Dendritic cell treated with granulocyte-macrophage colony-stimulating factor and Interleukin-4, amounts not matched to agents 40 ng/mL and 50 ng/mL, for 4 days (primary cell): ENCODE measurements at regions of chr5 and their contacts with region 1.

Region 1: DNA sequence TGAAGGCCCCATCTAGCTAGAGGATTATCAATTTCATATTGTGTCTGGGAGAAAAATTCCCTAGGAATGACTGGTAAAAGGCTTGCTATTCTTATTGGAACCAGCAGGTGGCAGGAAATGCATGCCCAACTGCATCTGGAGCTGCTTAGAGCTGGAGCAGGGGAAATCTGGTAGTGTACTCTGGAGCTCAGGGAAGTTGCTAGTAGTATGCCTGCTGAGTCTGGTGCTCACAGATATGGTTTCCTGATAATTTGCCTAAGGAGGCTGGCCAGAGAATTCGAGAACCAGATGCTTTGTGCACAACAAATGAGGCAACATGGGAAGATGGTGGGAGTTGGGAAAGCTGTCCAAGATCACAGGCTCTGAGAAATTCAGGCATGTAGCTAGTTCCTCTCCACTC is 53.7 kb downstream of the G3BP1 start:
- H3K4me3 Mint-ChIP-seq: no peak overlapping the region
- H3K27ac Mint-ChIP-seq: no peak overlapping the region
- H3K4me1 Mint-ChIP-seq: no peaks in the 10 kb centered on the region
- H3K27me3 Mint-ChIP-seq: no peaks in the 10 kb centered on the region

Region 2: DNA sequence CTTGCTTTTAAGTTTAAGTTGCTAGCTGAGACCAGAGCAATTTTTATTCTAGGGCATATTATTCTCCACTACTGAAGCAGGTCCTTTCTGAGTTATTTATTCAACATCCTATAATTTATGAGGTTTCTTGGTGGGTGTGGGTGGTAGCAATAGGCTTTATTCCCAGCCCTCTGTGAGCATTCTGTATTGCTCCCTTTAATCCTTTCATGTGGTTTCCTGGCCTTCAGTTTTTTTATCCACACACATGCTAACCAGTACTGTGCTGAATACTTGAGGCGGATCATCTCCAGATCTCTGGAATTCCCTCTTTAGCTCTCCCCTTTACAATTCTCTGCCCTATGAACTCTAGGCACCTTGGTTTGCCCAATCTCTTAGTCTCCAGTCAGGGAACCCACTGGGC is 191.0 kb after region 1 on chr5:
- intact Hi-C with region 1: no loop called
- H3K4me3 Mint-ChIP-seq: no peak overlapping the region
- H3K27ac Mint-ChIP-seq: no peak overlapping the region
- H3K4me1 Mint-ChIP-seq: no peaks in the 10 kb centered on the region
- H3K27me3 Mint-ChIP-seq: no peaks in the 10 kb centered on the region

Region 3: GRCh38 chr5:152142840-152143469 is 317.5 kb after region 1 on chr5:
- intact Hi-C with region 1: loop called (anchors 1 kb)
- H3K4me3 Mint-ChIP-seq: no peak overlapping the region
- H3K27ac Mint-ChIP-seq: no peak overlapping the region
- H3K4me1 Mint-ChIP-seq: no peaks in the 10 kb centered on the region
- H3K27me3 Mint-ChIP-seq: peaks cover 3% of the 10 kb centered on the region

Region 4: DNA sequence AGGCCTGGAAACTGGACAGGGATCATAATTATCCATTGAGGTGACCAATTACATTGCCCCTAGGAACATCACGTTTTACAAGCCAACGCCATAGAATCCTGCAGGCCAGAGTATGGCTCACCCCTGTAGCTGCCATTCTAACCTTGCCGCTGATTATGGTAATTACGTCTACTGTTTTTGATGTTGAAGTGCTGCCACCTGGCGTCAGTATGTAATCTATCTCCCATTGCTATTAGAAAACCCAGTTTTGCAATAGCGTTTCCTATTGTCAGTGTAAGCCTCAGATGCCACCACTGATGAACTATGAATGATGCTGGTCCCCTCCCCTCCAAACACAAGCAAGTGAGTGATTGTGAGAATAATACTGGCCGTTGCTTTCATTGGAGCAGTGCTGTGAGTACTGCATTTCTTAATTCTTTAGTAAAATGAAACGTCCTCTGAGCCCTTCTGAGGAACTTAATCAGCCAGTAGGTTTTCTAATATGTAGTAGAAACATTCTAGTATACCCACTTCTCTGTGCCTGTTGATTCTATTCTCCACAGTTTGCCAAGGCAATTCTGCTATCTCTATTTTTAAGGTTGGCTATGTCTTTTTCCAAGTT is 680.1 kb after region 1 on chr5:
- intact Hi-C with region 1: loop called (anchors 2 kb)
- H3K4me3 Mint-ChIP-seq: no peak overlapping the region
- H3K27ac Mint-ChIP-seq: no peak overlapping the region
- H3K4me1 Mint-ChIP-seq: no peaks in the 10 kb centered on the region
- H3K27me3 Mint-ChIP-seq: peaks cover 2% of the 10 kb centered on the region